ENCODE measurements at regions of chr10 and their contacts with region 1.

Region 1: GRCh38 chr10:124418726-124419501 is at the start of gene OAT:
- DNase-seq: peak; percentile 92
- ATAC-seq: peak; percentile 96
- H3K4me3 ChIP-seq: peak within 1 kb of the TSS; percentile 67
- H3K27ac ChIP-seq: peak within 1 kb of the TSS; percentile 63
- H3K4me1 ChIP-seq: no peaks in the 10 kb centered on the region
- H3K27me3 ChIP-seq: peaks cover 10% of the 10 kb centered on the region; the same call in 1 of the 2 replicates
- CTCF ChIP-seq: 0 out of 2 replicates have a peak, but pooled peaks have one; percentile 1
- POLR2A ChIP-seq: peak; percentile 99
- RAD21 ChIP-seq: no peak
- total RNA-seq, gene OAT: 152 and 190 TPM in 2 replicates

Region 2: GRCh38 chr10:123154092-123154921 is 1264.6 kb before region 1 on chr10 and contains the start of gene BUB3:
- CTCF ChIA-PET with region 1: no interaction called
- POLR2A ChIA-PET with region 1: no interaction called
- dilution Hi-C with region 1: no loop called
- in situ Hi-C with region 1: no loop called
- intact Hi-C with region 1: loop called (anchors 10 kb)
- DNase-seq: peak; percentile 100
- ATAC-seq: peak; percentile 94
- H3K4me3 ChIP-seq: peak within 1 kb of the TSS; percentile 79
- H3K27ac ChIP-seq: peak within 1 kb of the TSS; percentile 75
- H3K4me1 ChIP-seq: peaks cover 1% of the 10 kb centered on the region
- H3K27me3 ChIP-seq: peaks cover 28% of the 10 kb centered on the region
- CTCF ChIP-seq: no peak
- POLR2A ChIP-seq: peak; percentile 94
- RAD21 ChIP-seq: no peak
- total RNA-seq, gene BUB3: 346 and 384 TPM in 2 replicates

Region 3: DNA sequence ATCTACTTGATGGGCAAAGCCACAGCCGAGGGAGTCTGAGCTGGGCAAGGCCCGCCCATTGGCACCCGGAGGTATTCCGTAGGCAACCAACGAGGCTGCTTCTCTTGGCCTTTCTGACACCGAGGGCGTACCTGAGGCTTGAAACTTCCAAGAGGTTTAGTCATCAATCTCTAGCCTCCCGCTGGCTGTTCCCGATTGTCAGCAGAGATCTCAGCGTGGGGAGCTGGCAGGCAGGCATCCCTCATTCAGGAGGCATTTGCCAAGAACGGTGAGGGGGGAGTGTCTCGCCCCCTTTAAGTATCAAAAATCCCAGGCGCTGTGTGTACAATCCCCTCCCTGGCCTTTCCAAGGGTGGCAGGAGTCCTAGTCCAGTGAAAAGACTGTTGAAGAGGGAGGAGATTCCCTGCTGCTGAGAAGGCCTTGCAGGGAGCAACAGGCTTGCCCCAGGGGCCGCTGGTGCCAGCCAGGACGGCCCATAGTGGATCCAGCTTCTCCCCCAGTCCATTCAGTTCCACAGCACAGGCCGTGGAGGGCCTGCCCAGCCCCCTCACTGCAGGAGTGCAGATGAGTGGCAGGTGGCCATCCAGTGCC is 39.9 kb before region 1 on chr10:
- CTCF ChIA-PET with region 1: no interaction called
- POLR2A ChIA-PET with region 1: no interaction called
- dilution Hi-C with region 1: no loop called
- in situ Hi-C with region 1: no loop called
- intact Hi-C with region 1: no loop called
- DNase-seq: no peak
- ATAC-seq: no peak
- H3K4me3 ChIP-seq: no peak overlapping the region
- H3K27ac ChIP-seq: no peak overlapping the region
- H3K4me1 ChIP-seq: no peaks in the 10 kb centered on the region
- H3K27me3 ChIP-seq: peaks cover 16% of the 10 kb centered on the region
- CTCF ChIP-seq: no peak
- POLR2A ChIP-seq: no peak
- RAD21 ChIP-seq: no peak

Region 4: GRCh38 chr10:124472071-124472470 is 53.2 kb after region 1 on chr10:
- CTCF ChIA-PET with region 1: no interaction called
- POLR2A ChIA-PET with region 1: no interaction called
- dilution Hi-C with region 1: no loop called
- in situ Hi-C with region 1: no loop called
- intact Hi-C with region 1: loop called (anchors 2 kb)
- DNase-seq: no peak
- ATAC-seq: peak; percentile 49; the same call in 1 of the 2 replicates
- H3K4me3 ChIP-seq: no peak overlapping the region
- H3K27ac ChIP-seq: no peak overlapping the region
- H3K4me1 ChIP-seq: no peaks in the 10 kb centered on the region
- H3K27me3 ChIP-seq: no peaks in the 10 kb centered on the region
- CTCF ChIP-seq: no peak
- POLR2A ChIP-seq: no peak
- RAD21 ChIP-seq: no peak